Activated B cell treated with CpG ODN at 0.5 μM for 24 hours (primary cell): ENCODE measurements at regions of chr1 and their contacts with region 1.

Region 1: DNA sequence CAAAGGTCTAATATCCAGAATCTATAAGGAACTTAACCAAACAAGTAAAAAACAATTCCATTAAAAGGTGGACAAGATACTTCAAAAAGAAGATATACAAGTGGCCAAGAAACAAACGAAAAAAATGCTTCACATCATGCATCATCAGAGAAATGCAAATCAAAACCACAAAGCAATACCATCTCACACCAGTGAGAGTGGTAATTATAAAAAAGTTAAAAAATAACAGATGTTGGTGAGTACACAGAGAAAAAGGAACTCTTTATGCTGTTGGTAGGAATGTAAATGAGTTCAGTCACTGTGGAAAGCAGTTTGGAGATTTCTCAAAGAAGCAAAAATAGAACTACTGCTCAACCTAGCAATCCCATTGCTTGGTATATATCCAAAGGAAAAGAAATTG is 218.6 kb downstream of the SLC44A5 start:
- DNase-seq: no peak
- ATAC-seq: peak; percentile 49
- H3K4me3 Mint-ChIP-seq: no peak overlapping the region
- H3K27ac Mint-ChIP-seq: no peak overlapping the region
- H3K4me1 Mint-ChIP-seq: peaks cover 30% of the 10 kb centered on the region
- H3K27me3 Mint-ChIP-seq: no peaks in the 10 kb centered on the region
- CTCF ChIP-seq: no peak

Region 2: DNA sequence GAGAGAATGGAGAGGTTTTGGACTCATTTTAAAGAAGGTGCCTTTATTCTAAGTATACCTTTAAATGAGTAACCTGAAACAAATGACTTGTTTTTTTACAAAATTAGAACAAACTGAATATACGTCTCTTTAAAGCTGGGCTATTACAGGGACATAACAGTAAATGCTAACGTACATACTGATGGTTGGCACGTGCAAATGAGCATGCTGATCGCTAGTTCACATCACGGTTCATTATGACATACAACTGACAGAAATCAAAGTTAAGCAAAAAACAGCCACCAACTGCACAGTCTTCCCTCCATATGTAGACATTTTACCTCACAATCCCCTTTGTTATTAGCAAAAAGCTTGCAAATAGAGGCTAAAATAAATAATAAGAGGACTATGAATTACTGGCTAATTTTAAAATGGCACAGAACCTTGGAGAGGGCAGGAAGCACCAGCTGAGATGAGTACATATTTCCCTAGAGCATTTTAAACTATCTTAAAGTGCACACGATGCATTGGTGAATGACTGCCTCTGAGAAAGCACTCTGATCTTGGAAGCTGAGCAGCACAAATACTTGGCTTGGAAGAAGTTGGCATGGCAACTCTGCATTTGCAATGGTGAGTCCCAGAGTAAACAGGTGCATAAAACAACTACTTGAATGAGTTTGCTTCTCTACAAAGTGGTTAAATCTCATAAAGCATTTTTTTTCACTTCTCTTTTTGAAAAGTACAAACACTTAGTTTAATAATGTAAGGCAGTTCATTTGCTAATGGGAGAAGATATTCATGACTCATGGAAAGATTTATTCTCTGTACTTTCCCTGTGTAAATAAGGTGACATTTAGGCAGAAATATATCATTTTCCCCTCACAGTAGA is 53.4 kb before region 1 on chr1:
- CTCF ChIA-PET with region 1: no interaction called
- POLR2A ChIA-PET with region 1: no interaction called
- intact Hi-C with region 1: loop called (anchors 1 kb)
- DNase-seq: no peak
- ATAC-seq: peak; percentile 71
- H3K4me3 Mint-ChIP-seq: no peak overlapping the region
- H3K27ac Mint-ChIP-seq: peak overlapping the region; percentile 54
- H3K4me1 Mint-ChIP-seq: peaks cover 39% of the 10 kb centered on the region
- H3K27me3 Mint-ChIP-seq: no peaks in the 10 kb centered on the region
- CTCF ChIP-seq: no peak